H1 (cell line): ENCODE measurements at regions of chr16 and their contacts with region 1.

Region 1: GRCh38 chr16:48558371-48558841 is 51.6 kb downstream of the N4BP1 start:
- DNase-seq: no peak
- H3K4me3 ChIP-seq: no peak overlapping the region
- H3K27ac ChIP-seq: no peak overlapping the region
- H3K4me1 ChIP-seq: peaks cover 3 to 9% (median 4%) of the 10 kb centered on the region in 4 experiments; a peak in 6 of 7 replicates
- H3K27me3 ChIP-seq: no peaks in the 10 kb centered on the region
- CTCF ChIP-seq: no peak
- EP300 ChIP-seq: no peak
- POLR2A ChIP-seq: no peak
- RAD21 ChIP-seq: no peak

Region 2: DNA sequence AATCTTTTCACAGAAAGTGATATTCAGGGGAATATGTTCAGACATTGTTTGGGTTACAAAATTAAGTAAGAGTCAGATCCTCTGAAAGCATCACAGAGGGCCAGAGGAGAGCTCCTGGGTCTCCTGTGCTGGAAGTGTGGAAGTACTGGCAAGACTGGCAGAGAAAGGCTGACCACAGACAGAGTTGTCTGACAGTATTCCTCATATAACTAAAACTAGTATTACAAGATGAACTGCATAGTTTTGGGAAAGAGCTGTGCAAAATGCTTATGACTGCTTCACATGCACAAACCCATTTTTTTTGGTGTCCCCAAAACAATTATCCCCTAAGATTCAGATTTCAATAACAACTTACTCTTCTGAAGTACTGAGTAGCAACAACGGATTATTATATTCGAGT is 16.4 kb after region 1 on chr16:
- CTCF ChIA-PET with region 1: no interaction called
- POLR2A ChIA-PET with region 1: interaction called, 12 read pairs
- DNase-seq: no peak
- H3K4me3 ChIP-seq: no peak overlapping the region
- H3K27ac ChIP-seq: no peak overlapping the region
- H3K4me1 ChIP-seq: no peaks in the 10 kb centered on the region; a peak in 1 of 7 replicates
- H3K27me3 ChIP-seq: no peaks in the 10 kb centered on the region
- CTCF ChIP-seq: no peak
- EP300 ChIP-seq: no peak
- POLR2A ChIP-seq: no peak
- RAD21 ChIP-seq: no peak